CD8-positive, alpha-beta T cell (primary cell): ENCODE measurements at regions of chr11 and their contacts with region 1.

Region 1: DNA sequence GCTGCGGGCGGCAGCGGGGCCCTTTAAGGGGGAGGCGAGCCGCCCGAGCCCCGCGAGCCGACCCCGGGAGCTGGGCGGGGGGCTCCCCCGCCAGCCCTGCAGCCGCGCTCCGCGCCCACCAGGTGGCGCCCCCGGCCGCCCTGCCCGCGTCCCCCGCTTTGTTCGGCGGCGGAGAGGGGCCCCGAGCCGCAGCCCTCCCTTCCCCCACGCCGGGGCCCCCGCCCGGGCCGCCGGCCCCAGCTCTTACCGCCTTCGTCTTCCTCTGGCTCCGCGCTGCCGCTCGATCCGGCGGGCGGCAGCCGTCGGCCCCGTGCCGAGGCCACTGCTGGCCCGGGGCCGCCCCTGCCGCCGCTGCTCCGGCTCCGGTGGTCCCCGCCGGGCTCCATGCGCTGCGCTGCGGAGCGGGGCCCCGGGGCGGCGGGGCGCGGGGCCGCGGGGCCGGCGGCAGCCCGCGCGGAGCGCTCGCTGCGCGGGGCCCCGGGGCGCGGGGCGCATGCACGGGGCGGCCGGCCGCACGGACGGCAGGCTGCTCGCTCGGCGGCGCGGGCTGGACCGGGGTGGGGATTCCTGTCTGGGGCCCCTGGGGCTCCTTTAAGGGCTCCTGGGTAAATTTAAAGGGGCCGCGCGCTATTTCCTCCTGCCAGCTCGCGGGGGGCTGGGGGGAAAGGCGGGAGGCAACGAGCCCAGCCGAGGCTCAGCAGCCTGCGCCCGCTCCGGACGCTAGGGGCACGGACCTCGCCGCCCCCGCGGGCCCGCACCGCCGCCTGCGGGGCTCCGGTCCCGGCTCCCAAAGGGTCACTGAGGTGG is at the start of gene ZFTA:
- DNase-seq: peak; percentile 33 to 81 (median 64)
- ATAC-seq: peak; percentile 76
- H3K4me3 ChIP-seq: peak within 1 kb of the TSS; percentile 69 to 85
- H3K4me3 Mint-ChIP-seq: peak within 1 kb of the TSS; percentile 94
- H3K27ac ChIP-seq: peak within 1 kb of the TSS in 1 of 2 experiments; percentile 13
- H3K27ac Mint-ChIP-seq: peak within 1 kb of the TSS; percentile 86
- H3K4me1 ChIP-seq: peaks cover 15% of the 10 kb centered on the region
- H3K4me1 Mint-ChIP-seq: peaks cover 16% of the 10 kb centered on the region
- H3K27me3 ChIP-seq: peaks cover 0 to 3% of the 10 kb centered on the region in 2 experiments
- H3K27me3 Mint-ChIP-seq: no peaks in the 10 kb centered on the region
- CTCF ChIP-seq: peak; percentile 52
- total RNA-seq, gene ZFTA: 3.2 to 5.7 TPM

Region 2: GRCh38 chr11:63567044-63567840 is 201.2 kb before region 1 on chr11:
- CTCF ChIA-PET with region 1: no interaction called
- POLR2A ChIA-PET with region 1: no interaction called
- intact Hi-C with region 1: no loop called
- DNase-seq: peak in 8 of 9 experiments; percentile 41 to 95 (median 62)
- ATAC-seq: peak; percentile 88
- H3K4me3 ChIP-seq: no peak overlapping the region
- H3K4me3 Mint-ChIP-seq: peak overlapping the region; percentile 13
- H3K27ac ChIP-seq: peak overlapping the region; percentile 50 to 90
- H3K27ac Mint-ChIP-seq: peak overlapping the region; percentile 90
- H3K4me1 ChIP-seq: peaks cover 33% of the 10 kb centered on the region
- H3K4me1 Mint-ChIP-seq: peaks cover 44% of the 10 kb centered on the region
- H3K27me3 ChIP-seq: no peaks in the 10 kb centered on the region
- H3K27me3 Mint-ChIP-seq: no peaks in the 10 kb centered on the region
- CTCF ChIP-seq: no peak

Region 3: DNA sequence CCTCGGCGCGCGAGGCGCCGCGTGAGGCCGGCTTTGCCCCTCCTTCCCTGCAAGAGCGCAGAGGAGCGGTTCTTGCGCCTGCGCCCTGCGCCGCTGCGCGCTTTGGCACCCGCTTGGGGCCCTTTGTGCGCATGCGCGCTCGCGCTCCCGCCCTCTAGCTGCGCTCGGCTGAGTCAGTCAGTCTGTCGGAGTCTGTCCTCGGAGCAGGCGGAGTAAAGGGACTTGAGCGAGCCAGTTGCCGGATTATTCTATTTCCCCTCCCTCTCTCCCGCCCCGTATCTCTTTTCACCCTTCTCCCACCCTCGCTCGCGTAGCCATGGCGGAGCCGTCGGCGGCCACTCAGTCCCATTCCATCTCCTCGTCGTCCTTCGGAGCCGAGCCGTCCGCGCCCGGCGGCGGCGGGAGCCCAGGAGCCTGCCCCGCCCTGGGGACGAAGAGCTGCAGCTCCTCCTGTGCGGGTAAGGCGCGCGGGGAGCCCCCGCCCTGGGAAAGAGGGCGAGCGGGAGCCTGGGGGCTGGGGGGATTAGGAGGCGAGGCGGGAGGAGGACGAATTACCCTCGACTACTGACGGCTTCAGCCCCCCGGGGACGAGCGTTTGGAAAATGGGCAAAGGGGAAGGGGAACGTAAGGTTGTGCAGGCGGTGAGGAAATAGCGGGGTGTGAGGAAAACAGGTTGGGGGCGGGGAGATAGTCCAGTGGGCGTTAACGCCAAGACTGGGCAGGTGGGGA is 87.0 kb before region 1 on chr11 and contains the start of gene RTN3:
- CTCF ChIA-PET with region 1: no interaction called
- POLR2A ChIA-PET with region 1: interaction called, 11 read pairs
- intact Hi-C with region 1: loop called in 1 of 2 experiments (anchors 1 kb)
- DNase-seq: peak; percentile 97 to 99 (median 99)
- ATAC-seq: peak; percentile 88
- H3K4me3 ChIP-seq: peak within 1 kb of the TSS; percentile 79 to 88
- H3K4me3 Mint-ChIP-seq: peak within 1 kb of the TSS; percentile 88
- H3K27ac ChIP-seq: peak within 1 kb of the TSS; percentile 63 to 76
- H3K27ac Mint-ChIP-seq: peak within 1 kb of the TSS; percentile 93
- H3K4me1 ChIP-seq: peaks cover 21% of the 10 kb centered on the region
- H3K4me1 Mint-ChIP-seq: peaks cover 25% of the 10 kb centered on the region
- H3K27me3 ChIP-seq: no peaks in the 10 kb centered on the region
- H3K27me3 Mint-ChIP-seq: no peaks in the 10 kb centered on the region
- CTCF ChIP-seq: peak; percentile 47
- total RNA-seq, gene RTN3: 12.4 to 13.2 TPM

Region 4: DNA sequence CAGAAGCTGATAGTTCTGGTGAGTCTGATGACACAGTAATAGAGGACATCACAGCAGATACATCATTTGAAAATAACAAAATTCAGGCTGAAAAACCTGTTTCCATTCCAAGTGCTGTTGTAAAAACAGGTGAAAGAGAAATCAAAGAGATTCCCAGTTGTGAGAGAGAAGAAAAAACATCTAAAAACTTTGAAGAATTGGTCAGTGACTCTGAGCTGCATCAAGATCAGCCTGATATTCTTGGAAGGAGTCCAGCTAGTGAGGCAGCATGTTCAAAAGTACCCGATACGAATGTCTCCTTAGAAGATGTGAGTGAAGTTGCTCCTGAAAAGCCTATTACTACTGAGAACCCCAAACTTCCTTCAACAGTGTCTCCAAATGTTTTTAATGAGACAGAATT is 48.5 kb before region 1 on chr11:
- CTCF ChIA-PET with region 1: no interaction called
- POLR2A ChIA-PET with region 1: no interaction called
- intact Hi-C with region 1: no loop called
- DNase-seq: no peak
- ATAC-seq: no peak
- H3K4me3 ChIP-seq: no peak overlapping the region
- H3K4me3 Mint-ChIP-seq: no peak overlapping the region
- H3K27ac ChIP-seq: no peak overlapping the region
- H3K27ac Mint-ChIP-seq: no peak overlapping the region
- H3K4me1 ChIP-seq: no peaks in the 10 kb centered on the region
- H3K4me1 Mint-ChIP-seq: no peaks in the 10 kb centered on the region
- H3K27me3 ChIP-seq: no peaks in the 10 kb centered on the region
- H3K27me3 Mint-ChIP-seq: no peaks in the 10 kb centered on the region
- CTCF ChIP-seq: no peak

Region 5: GRCh38 chr11:63906585-63906984 is 138.1 kb after region 1 on chr11:
- CTCF ChIA-PET with region 1: no interaction called
- POLR2A ChIA-PET with region 1: no interaction called
- intact Hi-C with region 1: loop called in 1 of 2 experiments (anchors 2 kb)
- DNase-seq: peak; percentile 28 to 74 (median 68)
- ATAC-seq: peak; percentile 77
- H3K4me3 ChIP-seq: no peak overlapping the region
- H3K4me3 Mint-ChIP-seq: no peak overlapping the region
- H3K27ac ChIP-seq: no peak overlapping the region
- H3K27ac Mint-ChIP-seq: no peak overlapping the region
- H3K4me1 ChIP-seq: no peaks in the 10 kb centered on the region
- H3K4me1 Mint-ChIP-seq: peaks cover 3% of the 10 kb centered on the region
- H3K27me3 ChIP-seq: no peaks in the 10 kb centered on the region
- H3K27me3 Mint-ChIP-seq: no peaks in the 10 kb centered on the region
- CTCF ChIP-seq: peak; percentile 38

Region 6: DNA sequence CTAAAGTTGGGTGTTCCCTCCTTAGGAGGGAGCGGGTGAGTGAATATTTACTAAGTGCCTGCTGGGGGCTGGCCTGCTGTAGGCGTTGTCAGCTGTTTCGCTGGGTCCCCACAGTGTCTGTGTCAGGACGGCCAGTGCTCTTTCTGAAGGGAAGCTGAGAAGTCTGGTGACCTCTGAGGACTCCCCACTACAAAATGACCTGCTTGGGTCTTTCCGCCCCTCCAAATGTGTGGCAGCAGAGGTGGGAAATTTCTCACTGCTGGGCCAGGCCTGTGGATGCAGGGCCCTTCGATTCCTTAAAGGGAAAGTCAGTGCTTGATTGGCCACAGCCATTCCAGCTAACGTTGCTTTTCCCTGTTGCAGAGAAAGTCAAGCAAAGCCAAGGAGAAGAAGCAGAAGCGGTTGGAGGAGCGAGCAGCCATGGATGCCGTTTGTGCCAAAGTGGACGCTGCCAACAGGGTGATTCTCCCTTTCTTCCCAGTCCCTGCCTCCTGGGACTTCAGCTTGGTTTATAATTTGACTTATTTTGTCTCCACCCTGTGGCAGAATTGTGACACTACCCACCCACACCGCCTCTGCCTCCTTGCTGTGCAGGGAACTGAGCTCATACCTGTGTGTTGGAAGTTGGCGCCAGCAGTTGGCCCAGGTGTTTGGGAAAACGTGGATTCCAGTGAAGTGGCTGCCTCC is 177.2 kb after region 1 on chr11:
- CTCF ChIA-PET with region 1: interaction called, 27 read pairs
- POLR2A ChIA-PET with region 1: no interaction called
- intact Hi-C with region 1: loop called (anchors 1 kb)
- DNase-seq: peak in 6 of 9 experiments; percentile 28 to 71 (median 58)
- ATAC-seq: peak; percentile 89
- H3K4me3 ChIP-seq: no peak overlapping the region
- H3K4me3 Mint-ChIP-seq: no peak overlapping the region
- H3K27ac ChIP-seq: no peak overlapping the region
- H3K27ac Mint-ChIP-seq: no peak overlapping the region
- H3K4me1 ChIP-seq: peaks cover under 1% of the 10 kb centered on the region
- H3K4me1 Mint-ChIP-seq: peaks cover 14% of the 10 kb centered on the region
- H3K27me3 ChIP-seq: no peaks in the 10 kb centered on the region
- H3K27me3 Mint-ChIP-seq: no peaks in the 10 kb centered on the region
- CTCF ChIP-seq: peak; percentile 62

Region 7: GRCh38 chr11:64152841-64153691 is 384.6 kb after region 1 on chr11:
- CTCF ChIA-PET with region 1: interaction called, 38 read pairs
- POLR2A ChIA-PET with region 1: no interaction called
- intact Hi-C with region 1: loop called (anchors 1 kb)
- DNase-seq: peak; percentile 50 to 84 (median 71)
- ATAC-seq: peak; percentile 98
- H3K4me3 ChIP-seq: no peak overlapping the region
- H3K4me3 Mint-ChIP-seq: no peak overlapping the region
- H3K27ac ChIP-seq: no peak overlapping the region
- H3K27ac Mint-ChIP-seq: no peak overlapping the region
- H3K4me1 ChIP-seq: no peaks in the 10 kb centered on the region
- H3K4me1 Mint-ChIP-seq: peaks cover 4% of the 10 kb centered on the region
- H3K27me3 ChIP-seq: no peaks in the 10 kb centered on the region
- H3K27me3 Mint-ChIP-seq: peaks cover 2% of the 10 kb centered on the region
- CTCF ChIP-seq: peak; percentile 99

Region 8: GRCh38 chr11:65593518-65594298 is 1825.3 kb after region 1 on chr11:
- CTCF ChIA-PET with region 1: no interaction called
- POLR2A ChIA-PET with region 1: no interaction called
- intact Hi-C with region 1: no loop called
- DNase-seq: peak in 7 of 9 experiments; percentile 48 to 74 (median 64)
- ATAC-seq: peak; percentile 56
- H3K4me3 ChIP-seq: no peak overlapping the region
- H3K4me3 Mint-ChIP-seq: no peak overlapping the region
- H3K27ac ChIP-seq: no peak overlapping the region
- H3K27ac Mint-ChIP-seq: no peak overlapping the region
- H3K4me1 ChIP-seq: peaks cover 12% of the 10 kb centered on the region
- H3K4me1 Mint-ChIP-seq: peaks cover 11% of the 10 kb centered on the region
- H3K27me3 ChIP-seq: no peaks in the 10 kb centered on the region
- H3K27me3 Mint-ChIP-seq: no peaks in the 10 kb centered on the region
- CTCF ChIP-seq: peak; percentile 59